ENCODE measurements at regions of chr6 and their contacts with region 1.

Region 1: DNA sequence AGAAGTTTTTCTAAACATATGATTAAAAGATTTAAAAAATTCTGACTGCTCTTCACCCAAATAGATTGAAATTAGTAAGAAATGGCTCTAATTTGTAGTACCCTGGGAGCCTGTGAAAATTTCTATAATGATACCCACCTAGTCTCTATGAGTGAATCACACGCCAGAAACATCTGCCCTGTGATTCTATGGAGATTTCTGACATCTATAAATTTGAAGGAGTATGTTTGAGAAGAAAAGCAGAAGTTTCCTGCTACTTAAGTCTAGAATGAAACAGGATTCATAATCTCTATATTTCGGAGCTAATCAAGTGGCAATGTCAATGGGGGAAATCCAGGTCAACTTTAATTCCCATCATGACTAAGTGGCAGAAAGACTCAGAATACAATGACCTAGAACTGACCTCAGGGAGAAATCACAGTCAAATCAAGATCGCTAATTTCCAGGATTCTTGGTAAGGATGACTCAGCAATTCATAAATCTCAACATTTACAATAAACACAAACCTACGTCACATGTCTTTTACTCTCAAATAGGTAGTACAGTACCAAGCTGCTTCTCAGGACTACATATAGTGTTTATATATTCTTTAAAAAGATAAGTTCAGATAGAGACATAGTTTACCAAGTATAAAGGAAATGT is 186.2 kb upstream of the TNFAIP3 start:
- DNase-seq: no peak
- H3K4me3 Mint-ChIP-seq: no peak overlapping the region
- H3K27ac Mint-ChIP-seq: peak overlapping the region; percentile 84
- H3K4me1 Mint-ChIP-seq: peaks cover 54% of the 10 kb centered on the region
- H3K27me3 Mint-ChIP-seq: peaks cover 8% of the 10 kb centered on the region

Region 2: DNA sequence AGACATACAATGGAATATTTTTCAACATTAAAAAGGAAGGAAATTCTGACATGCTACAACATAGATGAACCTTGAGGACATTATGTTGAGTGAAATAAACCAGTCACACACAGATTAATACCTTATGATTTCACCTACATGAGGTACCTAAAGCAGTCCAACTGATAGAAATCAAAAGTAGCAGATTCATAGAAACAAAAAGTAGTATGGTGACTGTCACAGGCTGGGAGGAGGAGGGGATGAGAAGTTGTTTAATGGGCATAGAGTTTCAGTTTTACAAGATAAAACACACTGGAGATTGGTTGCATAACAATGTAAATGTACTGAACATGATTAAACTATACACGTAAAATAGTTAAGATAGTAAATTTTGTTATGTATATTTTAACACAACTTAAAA is 138.1 kb before region 1 on chr6:
- CTCF ChIA-PET with region 1: no interaction called
- intact Hi-C with region 1: loop called (anchors 1 kb)
- DNase-seq: peak; percentile 22
- H3K4me3 Mint-ChIP-seq: no peak overlapping the region
- H3K27ac Mint-ChIP-seq: no peak overlapping the region
- H3K4me1 Mint-ChIP-seq: peaks cover 17% of the 10 kb centered on the region
- H3K27me3 Mint-ChIP-seq: no peaks in the 10 kb centered on the region

Region 3: GRCh38 chr6:137661601-137662000 is 19.2 kb before region 1 on chr6:
- CTCF ChIA-PET with region 1: interaction called, 5 read pairs
- intact Hi-C with region 1: loop called (anchors 1 kb)
- DNase-seq: peak; percentile 71
- H3K4me3 Mint-ChIP-seq: no peak overlapping the region
- H3K27ac Mint-ChIP-seq: no peak overlapping the region
- H3K4me1 Mint-ChIP-seq: peaks cover 19% of the 10 kb centered on the region
- H3K27me3 Mint-ChIP-seq: peaks cover 4% of the 10 kb centered on the region

Region 4: GRCh38 chr6:137699031-137699683 is 18.3 kb after region 1 on chr6:
- CTCF ChIA-PET with region 1: interaction called, 9 read pairs
- intact Hi-C with region 1: loop called (anchors 1 kb)
- DNase-seq: peak; percentile 71
- H3K4me3 Mint-ChIP-seq: peak overlapping the region; percentile 3
- H3K27ac Mint-ChIP-seq: peak overlapping the region; percentile 78
- H3K4me1 Mint-ChIP-seq: peaks cover 31% of the 10 kb centered on the region
- H3K27me3 Mint-ChIP-seq: peaks cover 12% of the 10 kb centered on the region

Region 5: GRCh38 chr6:137776786-137777686 is 96.2 kb after region 1 on chr6:
- CTCF ChIA-PET with region 1: no interaction called
- intact Hi-C with region 1: no loop called
- DNase-seq: no peak
- H3K4me3 Mint-ChIP-seq: no peak overlapping the region
- H3K27ac Mint-ChIP-seq: no peak overlapping the region
- H3K4me1 Mint-ChIP-seq: no peaks in the 10 kb centered on the region
- H3K27me3 Mint-ChIP-seq: no peaks in the 10 kb centered on the region

Region 6: GRCh38 chr6:137811121-137811915 is 130.5 kb after region 1 on chr6:
- CTCF ChIA-PET with region 1: no interaction called
- intact Hi-C with region 1: no loop called
- DNase-seq: peak; percentile 93
- H3K4me3 Mint-ChIP-seq: peak overlapping the region; percentile 52
- H3K27ac Mint-ChIP-seq: peak overlapping the region; percentile 94
- H3K4me1 Mint-ChIP-seq: peaks cover 75% of the 10 kb centered on the region
- H3K27me3 Mint-ChIP-seq: no peaks in the 10 kb centered on the region

Region 7: DNA sequence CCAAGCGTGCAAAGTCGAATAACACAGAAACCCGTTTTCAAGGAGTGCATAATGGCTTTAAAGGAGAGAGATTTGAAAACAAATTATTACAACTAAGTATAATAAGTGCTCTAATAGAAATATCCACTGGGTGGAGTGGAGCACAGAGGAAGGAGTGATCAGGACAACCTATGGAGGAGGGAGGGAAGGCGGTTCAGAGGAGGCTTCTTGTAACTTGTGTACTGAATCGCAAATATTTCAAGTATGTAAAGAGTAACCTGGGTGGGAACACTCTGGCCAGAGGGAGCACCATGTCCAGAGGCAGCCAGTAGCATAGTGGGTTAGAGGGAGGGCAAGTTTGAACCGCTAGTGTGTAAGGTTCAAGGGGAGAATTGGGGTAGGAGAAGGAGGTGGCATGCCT is 164.6 kb after region 1 on chr6:
- CTCF ChIA-PET with region 1: no interaction called
- intact Hi-C with region 1: loop called (anchors 1 kb)
- DNase-seq: no peak
- H3K4me3 Mint-ChIP-seq: no peak overlapping the region
- H3K27ac Mint-ChIP-seq: no peak overlapping the region
- H3K4me1 Mint-ChIP-seq: peaks cover 13% of the 10 kb centered on the region
- H3K27me3 Mint-ChIP-seq: no peaks in the 10 kb centered on the region

Region 8: GRCh38 chr6:137873273-137873762 is 192.5 kb after region 1 on chr6:
- CTCF ChIA-PET with region 1: no interaction called
- intact Hi-C with region 1: loop called (anchors 1 kb)
- DNase-seq: peak; percentile 97
- H3K4me3 Mint-ChIP-seq: peak overlapping the region; percentile 89
- H3K27ac Mint-ChIP-seq: peak overlapping the region; percentile 99
- H3K4me1 Mint-ChIP-seq: peaks cover 37% of the 10 kb centered on the region
- H3K27me3 Mint-ChIP-seq: no peaks in the 10 kb centered on the region

Region 9: GRCh38 chr6:137903933-137904821 is 223.4 kb after region 1 on chr6:
- CTCF ChIA-PET with region 1: no interaction called
- intact Hi-C with region 1: loop called (anchors 1 kb)
- DNase-seq: peak; percentile 77
- H3K4me3 Mint-ChIP-seq: peak overlapping the region; percentile 71
- H3K27ac Mint-ChIP-seq: peak overlapping the region; percentile 100
- H3K4me1 Mint-ChIP-seq: peaks cover 71% of the 10 kb centered on the region
- H3K27me3 Mint-ChIP-seq: no peaks in the 10 kb centered on the region

Region 10: DNA sequence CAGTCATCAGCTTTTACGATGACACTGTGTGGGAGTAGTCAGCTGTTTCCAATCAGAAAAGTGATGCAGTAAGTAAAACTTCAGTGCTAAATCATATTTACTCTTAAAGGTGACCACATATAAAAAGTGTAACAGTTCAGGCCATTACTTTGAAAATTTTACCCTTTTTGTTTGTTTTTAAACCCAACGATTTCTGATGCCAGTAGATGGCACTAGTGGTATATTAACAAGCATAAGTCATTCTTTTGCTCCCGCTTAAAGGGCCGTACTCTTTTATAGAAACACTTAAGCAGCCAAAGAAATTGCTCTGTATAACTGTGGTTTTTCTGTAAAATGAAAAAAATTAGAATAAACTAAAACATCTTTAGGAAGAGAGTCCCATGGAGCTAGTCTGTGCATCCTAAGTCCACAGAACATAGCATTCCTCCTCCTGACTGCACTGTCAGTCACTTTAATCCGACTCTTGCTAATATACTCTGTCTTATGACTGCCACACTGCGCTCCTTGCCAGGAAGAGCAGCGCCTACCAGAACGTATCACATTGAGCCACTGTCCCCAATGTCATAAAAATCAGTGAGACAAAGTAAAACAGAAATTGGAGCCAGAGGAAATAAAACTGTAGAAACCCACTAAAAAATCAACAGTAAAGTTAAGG is 748.2 kb after region 1 on chr6:
- CTCF ChIA-PET with region 1: no interaction called
- intact Hi-C with region 1: no loop called
- DNase-seq: no peak
- H3K4me3 Mint-ChIP-seq: no peak overlapping the region
- H3K27ac Mint-ChIP-seq: no peak overlapping the region
- H3K4me1 Mint-ChIP-seq: no peaks in the 10 kb centered on the region
- H3K27me3 Mint-ChIP-seq: peaks cover 2% of the 10 kb centered on the region